WTC11 (cell line): ENCODE measurements at regions of chr2 and their contacts with region 1.

Region 1: GRCh38 chr2:225282858-225283710 is 116.4 kb upstream of the NYAP2 start:
- DNase-seq: peak; percentile 22
- ATAC-seq: peak; percentile 93
- H3K4me3 Mint-ChIP-seq: no peak overlapping the region
- H3K27ac Mint-ChIP-seq: no peak overlapping the region
- H3K4me1 Mint-ChIP-seq: peaks cover 10% of the 10 kb centered on the region
- H3K27me3 Mint-ChIP-seq: no peaks in the 10 kb centered on the region
- CTCF ChIP-seq: peak; percentile 75

Region 2: GRCh38 chr2:225296951-225297350 is 13.9 kb after region 1 on chr2:
- CTCF ChIA-PET with region 1: no interaction called
- POLR2A ChIA-PET with region 1: no interaction called
- DNase-seq: no peak
- ATAC-seq: no peak
- H3K4me3 Mint-ChIP-seq: no peak overlapping the region
- H3K27ac Mint-ChIP-seq: no peak overlapping the region; the same call in 1 of the 2 replicates
- H3K4me1 Mint-ChIP-seq: no peaks in the 10 kb centered on the region
- H3K27me3 Mint-ChIP-seq: no peaks in the 10 kb centered on the region; the same call in 1 of the 2 replicates
- CTCF ChIP-seq: no peak

Region 3: DNA sequence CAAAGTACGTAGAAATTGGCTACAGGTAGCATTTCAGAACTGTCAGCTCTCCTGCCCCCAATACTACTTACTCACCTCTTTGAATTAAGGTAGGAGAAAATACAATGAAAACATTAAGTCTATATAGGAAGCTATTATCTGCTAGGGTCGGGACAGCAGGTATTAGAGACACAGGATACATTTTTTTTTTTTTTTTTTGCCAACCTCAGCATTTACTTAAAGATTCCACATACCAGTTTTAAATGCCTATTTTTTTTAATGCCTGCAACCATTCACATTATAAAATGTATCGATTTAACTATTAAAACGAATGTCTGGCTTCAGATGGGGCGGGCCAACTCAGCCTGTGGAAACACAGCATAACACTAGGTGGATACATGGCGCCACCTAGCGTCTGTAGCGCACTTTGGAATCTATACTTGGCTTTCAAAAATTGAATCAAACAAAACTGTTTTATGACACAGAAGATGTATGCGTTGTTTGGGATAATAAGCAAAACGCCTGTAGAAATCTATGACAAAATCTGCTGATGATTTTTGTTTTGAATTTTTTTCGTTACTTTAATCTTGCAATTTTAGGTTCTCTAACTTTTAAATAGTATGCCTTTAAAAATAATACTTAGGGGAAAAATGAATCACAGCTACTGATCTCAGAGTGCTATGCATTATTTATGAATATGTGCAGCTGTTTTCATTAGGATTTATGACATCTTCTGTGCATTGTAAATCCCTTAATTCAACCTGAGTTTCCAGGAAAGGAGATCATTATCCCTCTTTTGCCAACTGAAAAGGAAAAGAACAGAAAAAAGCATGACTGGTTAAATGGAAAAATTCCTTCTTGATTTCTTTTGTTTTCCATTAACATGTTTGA is 377.4 kb after region 1 on chr2:
- CTCF ChIA-PET with region 1: interaction called, 10 read pairs
- POLR2A ChIA-PET with region 1: no interaction called
- DNase-seq: peak; percentile 81
- ATAC-seq: peak; percentile 76
- H3K4me3 Mint-ChIP-seq: no peak overlapping the region
- H3K27ac Mint-ChIP-seq: no peak overlapping the region
- H3K4me1 Mint-ChIP-seq: peaks cover 18% of the 10 kb centered on the region
- H3K27me3 Mint-ChIP-seq: no peaks in the 10 kb centered on the region
- CTCF ChIP-seq: peak; percentile 78